Psoas muscle (tissue), 8 donors: ENCODE measurements at regions of chr2 and their contacts with region 1.

Region 1: GRCh38 chr2:208062113-208062512 is 36.8 kb upstream of the PLEKHM3 start:
- DNase-seq: no peak
- ATAC-seq: no peak
- H3K4me3 ChIP-seq: no peak overlapping the region
- H3K27ac ChIP-seq: no peak overlapping the region
- H3K4me1 ChIP-seq: no peaks in the 10 kb centered on the region
- H3K27me3 ChIP-seq: no peaks in the 10 kb centered on the region
- CTCF ChIP-seq: peak; percentile 25

Region 2: DNA sequence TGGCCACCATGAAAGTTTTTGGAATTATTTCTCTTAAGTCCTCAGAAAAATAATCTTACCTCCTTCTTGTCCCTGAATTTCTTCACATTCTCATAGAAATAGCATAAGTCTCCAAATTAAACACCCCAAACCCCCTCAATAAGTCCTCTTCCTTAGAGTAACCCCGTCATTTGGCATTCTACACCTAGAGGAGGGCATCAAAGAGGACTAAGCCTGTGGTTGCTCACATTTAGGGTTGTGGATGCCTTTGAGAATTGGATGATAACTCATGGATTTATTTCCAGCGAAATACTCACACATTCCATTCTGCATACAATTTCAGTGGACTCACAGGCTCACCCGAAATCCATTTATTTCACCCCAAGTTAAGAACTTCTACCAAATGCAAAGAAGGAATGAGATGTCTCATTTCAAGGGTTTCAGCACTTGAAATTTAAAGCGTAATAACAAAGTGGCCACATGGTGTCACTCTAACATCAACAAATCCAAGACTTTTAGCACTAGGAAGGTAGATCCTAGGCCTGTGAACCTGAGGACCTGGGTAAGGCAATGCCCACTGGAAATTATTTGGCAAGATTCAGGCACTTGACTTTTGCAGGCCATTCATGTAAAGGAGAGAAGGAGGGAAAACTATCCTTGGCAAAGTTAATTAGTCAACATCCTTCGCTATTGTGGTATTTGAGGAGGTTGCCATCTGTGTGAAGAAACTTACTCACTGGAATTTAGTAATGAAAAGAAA is 1368.5 kb before region 1 on chr2:
- intact Hi-C with region 1: loop called in 1 of 2 experiments (anchors 10 kb)
- DNase-seq: no peak
- ATAC-seq: peak; percentile 61 to 81 (median 62)
- H3K4me3 ChIP-seq: no peak overlapping the region
- H3K27ac ChIP-seq: no peak overlapping the region
- H3K4me1 ChIP-seq: no peaks in the 10 kb centered on the region
- H3K27me3 ChIP-seq: no peaks in the 10 kb centered on the region
- CTCF ChIP-seq: peak; percentile 66